ENCODE measurements at regions of chr1 and their contacts with region 1.

Region 1: DNA sequence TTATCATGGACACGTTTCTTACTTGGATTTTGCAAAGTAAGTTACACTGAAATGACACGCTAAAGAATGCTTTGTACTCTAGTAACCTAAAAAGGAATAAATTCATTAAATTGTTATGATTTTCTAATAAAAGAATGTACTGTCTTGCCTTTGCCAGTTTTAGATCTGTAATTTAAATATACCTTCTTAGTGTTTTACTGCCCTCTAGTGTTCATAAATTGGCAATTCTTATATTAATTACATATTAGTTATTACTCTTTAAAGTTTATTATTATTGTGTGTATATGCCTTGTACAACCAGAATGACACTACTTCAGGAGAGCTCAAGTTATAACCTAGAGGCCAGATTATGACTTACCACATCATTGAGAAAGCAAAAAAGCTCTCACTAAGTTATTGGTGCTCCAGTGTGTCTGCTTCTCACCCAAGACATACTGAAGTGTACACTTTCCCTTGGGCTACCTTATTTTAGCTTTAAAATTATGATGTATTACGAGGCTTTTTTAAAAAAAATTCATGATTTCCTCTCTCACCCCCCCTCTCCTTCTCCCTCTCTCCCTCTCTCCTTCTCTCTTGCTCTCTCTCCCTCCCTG is 169.9 kb downstream of the HS2ST1 start:
- DNase-seq: peak in 3 of 14 experiments; percentile 46 to 53 (median 53)
- ATAC-seq: peak; percentile 39
- H3K4me3 ChIP-seq: no peak overlapping the region
- H3K4me3 Mint-ChIP-seq: no peak overlapping the region
- H3K27ac ChIP-seq: no peak overlapping the region
- H3K27ac Mint-ChIP-seq: peak overlapping the region; percentile 17
- H3K4me1 ChIP-seq: no peaks in the 10 kb centered on the region
- H3K4me1 Mint-ChIP-seq: no peaks in the 10 kb centered on the region
- H3K27me3 ChIP-seq: no peaks in the 10 kb centered on the region
- H3K27me3 Mint-ChIP-seq: no peaks in the 10 kb centered on the region
- CTCF ChIP-seq: peak; percentile 79

Region 2: DNA sequence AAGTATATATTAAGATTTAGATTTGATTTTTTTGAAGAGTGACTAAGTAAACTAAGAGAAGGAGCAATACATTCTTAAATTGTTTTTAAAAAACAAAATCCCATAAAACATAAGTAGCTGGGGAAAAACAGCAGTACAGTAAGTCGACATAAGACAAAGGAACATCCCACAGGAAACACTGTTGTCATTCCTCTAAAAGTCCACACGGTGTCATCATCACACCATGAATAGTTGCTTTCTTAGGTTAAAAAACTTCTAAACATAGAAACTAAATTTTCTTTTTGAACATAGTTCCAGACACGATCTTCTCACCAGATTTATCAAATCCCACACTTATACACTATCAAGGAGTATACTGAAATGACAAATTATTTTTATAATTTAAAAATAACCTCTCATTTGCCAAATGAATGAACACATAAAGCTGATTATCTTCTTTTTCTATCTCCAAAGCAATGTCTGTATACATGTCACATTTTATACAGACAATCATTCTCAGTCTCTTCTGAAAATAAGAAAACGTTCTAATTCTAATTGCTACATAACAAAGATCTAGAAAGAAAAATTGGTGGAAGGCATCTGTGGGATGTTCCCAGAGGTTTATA is 704.0 kb before region 1 on chr1:
- CTCF ChIA-PET with region 1: no interaction called
- POLR2A ChIA-PET with region 1: no interaction called
- intact Hi-C with region 1: loop called (anchors 2 to 10 kb)
- DNase-seq: peak in 4 of 14 experiments; percentile 38 to 80 (median 72)
- ATAC-seq: peak; percentile 86
- H3K4me3 ChIP-seq: no peak overlapping the region
- H3K4me3 Mint-ChIP-seq: no peak overlapping the region
- H3K27ac ChIP-seq: no peak overlapping the region
- H3K27ac Mint-ChIP-seq: peak overlapping the region; percentile 69
- H3K4me1 ChIP-seq: no peaks in the 10 kb centered on the region
- H3K4me1 Mint-ChIP-seq: peaks cover 29% of the 10 kb centered on the region
- H3K27me3 ChIP-seq: no peaks in the 10 kb centered on the region
- H3K27me3 Mint-ChIP-seq: no peaks in the 10 kb centered on the region
- CTCF ChIP-seq: peak; percentile 95

Region 3: DNA sequence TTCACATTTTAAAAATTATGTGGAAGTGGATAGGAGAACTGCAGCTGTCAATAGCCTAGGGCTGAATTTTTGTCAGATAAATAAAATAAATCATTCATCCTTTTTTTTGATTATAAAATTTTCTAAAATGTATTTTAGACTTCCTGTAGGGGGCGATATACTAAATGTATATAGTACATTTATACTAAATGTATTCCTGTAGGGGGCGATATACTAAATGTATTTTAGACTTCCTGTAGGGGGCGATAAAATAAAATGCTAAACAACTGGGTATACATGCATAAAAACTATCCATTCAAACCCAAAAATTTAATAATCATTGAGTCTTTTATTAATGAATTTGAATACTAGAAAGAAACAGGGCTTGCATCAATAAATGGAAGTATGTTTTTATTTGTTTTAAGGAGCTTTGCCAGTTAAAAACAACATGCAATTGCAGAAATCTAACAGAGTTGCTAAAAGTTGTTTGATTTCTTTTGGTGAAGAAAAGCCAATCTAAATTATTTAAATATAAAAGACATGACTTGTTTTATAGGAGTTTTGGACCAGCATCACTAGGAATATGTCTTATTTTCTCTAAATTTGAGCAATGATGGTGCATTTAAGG is 584.2 kb before region 1 on chr1:
- CTCF ChIA-PET with region 1: interaction called, 3 read pairs
- POLR2A ChIA-PET with region 1: no interaction called
- intact Hi-C with region 1: loop called in 1 of 2 experiments (anchors 5 kb)
- DNase-seq: peak in 3 of 14 experiments; percentile 55 to 79 (median 57)
- ATAC-seq: peak; percentile 61
- H3K4me3 ChIP-seq: no peak overlapping the region
- H3K4me3 Mint-ChIP-seq: no peak overlapping the region
- H3K27ac ChIP-seq: no peak overlapping the region
- H3K27ac Mint-ChIP-seq: no peak overlapping the region
- H3K4me1 ChIP-seq: peaks cover 7% of the 10 kb centered on the region
- H3K4me1 Mint-ChIP-seq: peaks cover 17% of the 10 kb centered on the region
- H3K27me3 ChIP-seq: peaks cover 0 to 3% of the 10 kb centered on the region in 2 experiments
- H3K27me3 Mint-ChIP-seq: peaks cover 23% of the 10 kb centered on the region
- CTCF ChIP-seq: peak; percentile 100

Region 4: GRCh38 chr1:86913896-86914634 is 170.3 kb before region 1 on chr1 and contains the start of gene SELENOF:
- CTCF ChIA-PET with region 1: no interaction called
- POLR2A ChIA-PET with region 1: interaction called, 4 read pairs
- intact Hi-C with region 1: loop called in 1 of 2 experiments (anchors 2 kb)
- DNase-seq: peak; percentile 98 to 100 (median 99)
- ATAC-seq: peak; percentile 88
- H3K4me3 ChIP-seq: peak within 1 kb of the TSS; percentile 90
- H3K4me3 Mint-ChIP-seq: no peak within 1 kb of the TSS
- H3K27ac ChIP-seq: peak within 1 kb of the TSS; percentile 95 to 96
- H3K27ac Mint-ChIP-seq: no peak within 1 kb of the TSS
- H3K4me1 ChIP-seq: peaks cover 25% of the 10 kb centered on the region
- H3K4me1 Mint-ChIP-seq: peaks cover 53% of the 10 kb centered on the region
- H3K27me3 ChIP-seq: no peaks in the 10 kb centered on the region
- H3K27me3 Mint-ChIP-seq: no peaks in the 10 kb centered on the region
- CTCF ChIP-seq: no peak
- total RNA-seq, gene SELENOF: 74.1 to 74.9 TPM

Region 5: GRCh38 chr1:87024936-87025540 is 59.3 kb before region 1 on chr1:
- CTCF ChIA-PET with region 1: no interaction called
- POLR2A ChIA-PET with region 1: no interaction called
- intact Hi-C with region 1: loop called in 1 of 2 experiments (anchors 5 kb)
- DNase-seq: peak in 2 of 14 experiments; percentile 24 to 25
- ATAC-seq: peak; percentile 29
- H3K4me3 ChIP-seq: no peak overlapping the region
- H3K4me3 Mint-ChIP-seq: no peak overlapping the region
- H3K27ac ChIP-seq: no peak overlapping the region
- H3K27ac Mint-ChIP-seq: no peak overlapping the region
- H3K4me1 ChIP-seq: no peaks in the 10 kb centered on the region
- H3K4me1 Mint-ChIP-seq: peaks cover 8% of the 10 kb centered on the region
- H3K27me3 ChIP-seq: no peaks in the 10 kb centered on the region
- H3K27me3 Mint-ChIP-seq: no peaks in the 10 kb centered on the region
- CTCF ChIP-seq: peak; percentile 23

Measured in CD4-positive, alpha-beta T cell (primary cell).